ENCODE measurements at regions of chr3 and their contacts with region 1.

Region 1: DNA sequence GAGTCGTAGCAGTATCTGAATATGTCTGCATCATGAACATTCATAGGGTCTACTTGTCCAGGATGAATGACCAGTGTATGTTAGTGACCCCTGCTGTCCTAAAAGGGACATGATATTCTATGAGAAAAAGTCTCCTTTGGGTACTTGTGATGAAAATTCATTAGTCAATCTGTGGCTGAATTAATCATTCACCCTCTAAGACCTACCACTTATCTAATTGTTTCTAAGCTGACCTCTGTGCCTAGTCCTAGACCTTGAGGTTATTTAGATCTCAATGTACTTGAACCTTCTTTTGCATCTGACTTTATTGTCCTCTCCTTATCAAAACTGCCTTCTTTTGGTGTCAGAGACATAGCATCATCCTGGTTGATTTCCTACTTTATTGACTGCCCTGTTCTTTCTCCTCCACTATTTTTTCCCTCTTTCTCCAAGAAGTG is 799.3 kb downstream of the DIPK2A start:
- DNase-seq: no peak
- ATAC-seq: no peak
- H3K4me3 ChIP-seq: no peak overlapping the region
- H3K4me3 Mint-ChIP-seq: no peak overlapping the region
- H3K27ac ChIP-seq: no peak overlapping the region
- H3K27ac Mint-ChIP-seq: no peak overlapping the region
- H3K4me1 ChIP-seq: no peaks in the 10 kb centered on the region
- H3K4me1 Mint-ChIP-seq: no peaks in the 10 kb centered on the region
- H3K27me3 ChIP-seq: no peaks in the 10 kb centered on the region
- H3K27me3 Mint-ChIP-seq: no peaks in the 10 kb centered on the region

Region 2: DNA sequence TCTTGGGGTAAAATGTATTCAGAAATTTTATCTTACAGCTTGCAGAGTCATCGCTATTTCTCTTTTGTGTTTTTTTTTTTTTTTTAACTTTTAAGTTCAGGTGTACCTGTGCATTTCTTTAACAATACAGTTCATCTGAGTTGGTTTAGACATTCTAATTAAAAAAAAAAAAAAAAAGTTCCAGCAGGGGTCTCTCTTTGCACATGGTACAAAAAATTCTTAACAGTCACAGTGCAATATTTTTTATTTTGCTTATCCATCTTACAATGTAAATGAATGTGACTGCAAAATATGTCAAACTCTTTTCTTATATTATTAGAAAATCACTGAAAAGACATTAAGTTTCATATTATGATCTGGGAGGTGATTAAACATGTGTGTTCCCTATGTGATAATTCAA is 875.1 kb before region 1 on chr3:
- CTCF ChIA-PET with region 1: no interaction called
- POLR2A ChIA-PET with region 1: no interaction called
- intact Hi-C with region 1: loop called in 1 of 2 experiments (anchors 5 kb)
- DNase-seq: no peak
- ATAC-seq: no peak
- H3K4me3 ChIP-seq: no peak overlapping the region
- H3K4me3 Mint-ChIP-seq: no peak overlapping the region
- H3K27ac ChIP-seq: no peak overlapping the region
- H3K27ac Mint-ChIP-seq: no peak overlapping the region
- H3K4me1 ChIP-seq: no peaks in the 10 kb centered on the region
- H3K4me1 Mint-ChIP-seq: no peaks in the 10 kb centered on the region
- H3K27me3 ChIP-seq: peaks cover 0 to 3% of the 10 kb centered on the region in 2 donors
- H3K27me3 Mint-ChIP-seq: peaks cover 8 to 23% (median 17%) of the 10 kb centered on the region in 5 donors

Region 3: DNA sequence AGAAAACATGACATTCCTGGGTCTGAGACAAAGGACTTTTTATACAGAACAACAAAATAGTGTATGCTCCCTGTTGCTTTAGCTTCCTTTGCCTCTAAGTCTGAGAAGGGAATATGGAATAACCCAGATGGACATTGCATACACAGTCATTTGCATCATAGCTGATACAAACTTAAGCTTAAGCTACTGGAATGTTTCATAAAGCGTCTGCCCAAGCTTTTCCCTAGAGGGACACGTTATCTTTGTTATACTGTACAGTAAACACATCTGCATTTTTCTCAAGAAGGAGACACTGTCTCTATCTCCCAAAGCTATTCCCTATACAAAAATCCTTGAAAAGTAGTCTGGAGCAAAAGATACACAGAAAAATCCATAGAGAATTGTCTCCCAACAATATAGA is 24.3 kb before region 1 on chr3:
- CTCF ChIA-PET with region 1: no interaction called
- POLR2A ChIA-PET with region 1: no interaction called
- intact Hi-C with region 1: no loop called
- DNase-seq: no peak
- ATAC-seq: no peak
- H3K4me3 ChIP-seq: no peak overlapping the region
- H3K4me3 Mint-ChIP-seq: no peak overlapping the region
- H3K27ac ChIP-seq: no peak overlapping the region
- H3K27ac Mint-ChIP-seq: no peak overlapping the region
- H3K4me1 ChIP-seq: no peaks in the 10 kb centered on the region
- H3K4me1 Mint-ChIP-seq: no peaks in the 10 kb centered on the region
- H3K27me3 ChIP-seq: no peaks in the 10 kb centered on the region
- H3K27me3 Mint-ChIP-seq: no peaks in the 10 kb centered on the region